ENCODE measurements at regions of chr10 and their contacts with region 1.

Region 1: DNA sequence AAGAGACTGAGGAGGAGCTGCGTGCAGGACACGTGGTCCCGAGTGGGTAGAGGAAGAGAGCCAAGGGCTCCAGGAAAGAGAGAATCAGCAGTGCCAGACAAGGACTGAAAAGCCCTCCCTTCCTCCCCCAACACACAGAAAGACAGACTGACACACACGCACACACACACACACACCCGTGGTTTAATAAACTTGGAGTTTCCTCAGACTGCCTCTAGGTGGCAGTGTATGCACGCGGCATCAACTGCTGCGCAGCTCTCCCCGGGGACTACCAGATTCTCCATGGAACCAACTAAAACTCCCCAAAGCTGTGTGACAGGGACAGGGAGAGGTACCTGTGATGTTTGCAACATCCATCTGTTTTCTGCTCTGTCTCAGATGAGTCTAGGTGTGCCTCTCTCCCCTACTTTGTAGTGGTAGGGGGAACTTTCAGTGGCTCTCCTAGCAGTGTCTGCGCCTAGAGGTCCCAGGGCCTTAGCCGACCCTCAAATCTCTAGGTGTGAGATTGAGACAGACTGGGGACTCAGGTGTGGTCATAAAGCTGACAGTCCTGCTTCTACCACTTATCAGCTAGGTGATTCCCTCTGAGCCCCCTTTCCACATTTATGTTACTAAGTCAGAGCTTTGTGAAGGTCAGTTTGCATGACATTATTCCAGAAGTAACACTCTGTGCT is 9.3 kb upstream of the TSPAN14 start:
- DNase-seq: peak; percentile 63 to 77
- H3K4me3 ChIP-seq: no peak overlapping the region
- H3K4me3 Mint-ChIP-seq: no peak overlapping the region
- H3K27ac Mint-ChIP-seq: no peak overlapping the region
- H3K4me1 ChIP-seq: peaks cover 57% of the 10 kb centered on the region
- H3K4me1 Mint-ChIP-seq: peaks cover 51% of the 10 kb centered on the region
- H3K27me3 ChIP-seq: no peaks in the 10 kb centered on the region
- H3K27me3 Mint-ChIP-seq: no peaks in the 10 kb centered on the region
- CTCF ChIP-seq: peak; percentile 82 to 91

Region 2: GRCh38 chr10:80382989-80383388 is 61.8 kb before region 1 on chr10:
- CTCF ChIA-PET with region 1: interaction called, 8 read pairs
- POLR2A ChIA-PET with region 1: no interaction called
- intact Hi-C with region 1: loop called (anchors 1 kb)
- DNase-seq: peak; percentile 43 to 52
- H3K4me3 ChIP-seq: no peak overlapping the region
- H3K4me3 Mint-ChIP-seq: no peak overlapping the region
- H3K27ac Mint-ChIP-seq: no peak overlapping the region
- H3K4me1 ChIP-seq: no peaks in the 10 kb centered on the region
- H3K4me1 Mint-ChIP-seq: peaks cover 5% of the 10 kb centered on the region
- H3K27me3 ChIP-seq: no peaks in the 10 kb centered on the region
- H3K27me3 Mint-ChIP-seq: peaks cover 3% of the 10 kb centered on the region
- CTCF ChIP-seq: peak; percentile 50 to 61

Region 3: DNA sequence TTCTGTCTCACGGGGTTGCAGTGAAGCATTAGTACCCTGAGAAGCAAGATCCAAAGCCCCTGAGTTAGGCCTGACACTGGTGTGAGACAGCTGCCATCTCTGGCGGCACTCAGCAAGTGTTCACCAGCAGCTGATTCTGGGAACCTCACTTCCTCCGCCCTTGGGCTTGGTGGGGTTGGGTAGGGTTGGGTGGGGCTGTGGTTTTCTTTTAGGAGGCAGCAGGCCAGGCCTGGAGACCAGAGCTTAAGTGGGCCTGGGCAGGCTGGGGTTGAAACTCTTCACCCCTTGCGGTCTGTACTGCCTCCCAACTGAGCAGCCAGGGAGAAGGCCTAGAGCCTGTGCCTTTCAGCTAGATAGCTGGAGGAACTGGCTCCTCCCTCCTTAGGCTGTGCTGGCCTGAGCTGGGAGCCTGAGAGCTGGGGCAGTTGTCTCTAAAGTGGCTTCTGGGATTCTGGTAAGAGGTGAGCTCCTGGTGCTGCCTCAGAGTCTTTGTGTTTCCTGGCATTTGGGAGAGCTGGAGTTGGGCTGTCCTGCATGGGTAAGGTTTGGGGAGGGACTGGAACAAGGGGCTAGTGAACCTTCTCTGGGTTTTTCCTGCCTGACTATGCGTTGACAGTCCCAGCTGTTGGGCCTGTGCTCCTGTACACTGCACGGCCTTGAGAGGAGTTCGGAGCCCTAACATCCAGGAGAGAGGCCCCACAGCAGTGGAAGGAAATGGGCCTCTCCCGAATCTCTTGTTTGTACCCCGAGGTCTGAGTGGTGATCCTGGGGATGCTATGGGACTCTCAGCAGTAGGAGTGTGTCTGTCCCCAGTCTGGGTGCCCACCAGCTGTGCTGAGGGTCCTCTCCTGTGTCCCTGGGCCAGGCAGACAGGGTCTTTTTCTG is 14.5 kb after region 1 on chr10:
- CTCF ChIA-PET with region 1: interaction called, 20 read pairs
- POLR2A ChIA-PET with region 1: no interaction called
- intact Hi-C with region 1: no loop called
- DNase-seq: no peak
- H3K4me3 ChIP-seq: no peak overlapping the region
- H3K4me3 Mint-ChIP-seq: peak overlapping the region; percentile 45
- H3K27ac Mint-ChIP-seq: peak overlapping the region; percentile 70
- H3K4me1 ChIP-seq: peaks cover 76% of the 10 kb centered on the region
- H3K4me1 Mint-ChIP-seq: peaks cover 57% of the 10 kb centered on the region
- H3K27me3 ChIP-seq: no peaks in the 10 kb centered on the region
- H3K27me3 Mint-ChIP-seq: no peaks in the 10 kb centered on the region
- CTCF ChIP-seq: no peak

Region 4: DNA sequence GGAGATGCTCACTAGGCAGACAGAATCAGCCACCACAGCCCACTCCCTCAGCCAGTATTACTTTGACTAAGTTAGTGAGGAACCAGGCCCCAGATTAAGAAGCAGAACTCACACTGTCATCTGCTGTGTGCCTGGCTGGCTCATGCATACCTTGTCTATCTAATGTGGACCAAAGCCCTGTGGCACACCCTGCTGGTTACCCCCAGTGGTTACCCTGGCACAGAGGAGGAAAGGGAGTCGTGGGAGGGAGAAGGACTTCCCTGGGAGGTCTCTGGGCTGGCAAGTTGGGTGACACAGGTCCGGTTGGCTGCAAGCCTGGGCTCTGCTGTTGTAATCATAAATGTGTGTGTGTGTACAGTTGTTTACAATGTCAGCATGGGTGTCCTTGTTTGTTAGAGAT is 85.5 kb after region 1 on chr10:
- CTCF ChIA-PET with region 1: no interaction called
- POLR2A ChIA-PET with region 1: no interaction called
- intact Hi-C with region 1: loop called (anchors 1 kb)
- DNase-seq: peak in 1 of 2 experiments; percentile 43
- H3K4me3 ChIP-seq: no peak overlapping the region
- H3K4me3 Mint-ChIP-seq: no peak overlapping the region
- H3K27ac Mint-ChIP-seq: peak overlapping the region; percentile 12
- H3K4me1 ChIP-seq: peaks cover 20% of the 10 kb centered on the region; the same call in 1 of the 2 replicates
- H3K4me1 Mint-ChIP-seq: peaks cover 10% of the 10 kb centered on the region
- H3K27me3 ChIP-seq: no peaks in the 10 kb centered on the region
- H3K27me3 Mint-ChIP-seq: no peaks in the 10 kb centered on the region
- CTCF ChIP-seq: peak in 1 of 2 experiments; percentile 23

Region 5: GRCh38 chr10:80614576-80615416 is 170.0 kb after region 1 on chr10:
- CTCF ChIA-PET with region 1: no interaction called
- POLR2A ChIA-PET with region 1: no interaction called
- intact Hi-C with region 1: loop called (anchors 1 kb)
- DNase-seq: no peak
- H3K4me3 ChIP-seq: no peak overlapping the region
- H3K4me3 Mint-ChIP-seq: no peak overlapping the region
- H3K27ac Mint-ChIP-seq: no peak overlapping the region
- H3K4me1 ChIP-seq: no peaks in the 10 kb centered on the region; the same call in 1 of the 2 replicates
- H3K4me1 Mint-ChIP-seq: no peaks in the 10 kb centered on the region
- H3K27me3 ChIP-seq: no peaks in the 10 kb centered on the region
- H3K27me3 Mint-ChIP-seq: peaks cover 3% of the 10 kb centered on the region
- CTCF ChIP-seq: no peak

Region 6: DNA sequence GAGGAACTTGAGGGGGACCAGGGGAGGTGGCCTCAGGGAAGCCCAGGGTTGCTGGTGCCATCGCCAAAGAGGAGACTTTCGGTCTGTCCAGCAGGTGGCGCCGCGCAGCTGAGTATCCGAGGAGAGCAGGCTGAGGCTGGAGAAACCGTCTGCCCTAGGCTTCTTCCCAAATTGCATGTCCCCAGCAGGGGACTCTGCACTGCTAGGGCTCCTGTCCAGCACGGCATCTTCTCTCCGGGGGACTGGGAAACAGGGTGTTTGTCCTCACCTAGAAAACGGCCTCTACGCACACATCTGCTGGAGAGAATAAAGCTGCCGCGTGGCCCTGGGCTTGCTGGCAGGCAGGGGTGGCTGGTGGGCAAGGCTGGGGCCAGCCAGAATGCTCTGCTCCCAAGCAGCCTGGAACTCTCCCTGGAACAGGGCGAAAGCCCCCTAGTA is 254.8 kb after region 1 on chr10:
- CTCF ChIA-PET with region 1: interaction called, 3 read pairs
- POLR2A ChIA-PET with region 1: no interaction called
- intact Hi-C with region 1: loop called (anchors 1 kb)
- DNase-seq: peak; percentile 83 to 90
- H3K4me3 ChIP-seq: no peak overlapping the region
- H3K4me3 Mint-ChIP-seq: no peak overlapping the region
- H3K27ac Mint-ChIP-seq: no peak overlapping the region
- H3K4me1 ChIP-seq: no peaks in the 10 kb centered on the region
- H3K4me1 Mint-ChIP-seq: peaks cover 8% of the 10 kb centered on the region
- H3K27me3 ChIP-seq: no peaks in the 10 kb centered on the region
- H3K27me3 Mint-ChIP-seq: no peaks in the 10 kb centered on the region
- CTCF ChIP-seq: peak; percentile 90 to 94

Measured in Caco-2 (cell line).